ENCODE measurements at regions of chr1 and their contacts with region 1.

Region 1: DNA sequence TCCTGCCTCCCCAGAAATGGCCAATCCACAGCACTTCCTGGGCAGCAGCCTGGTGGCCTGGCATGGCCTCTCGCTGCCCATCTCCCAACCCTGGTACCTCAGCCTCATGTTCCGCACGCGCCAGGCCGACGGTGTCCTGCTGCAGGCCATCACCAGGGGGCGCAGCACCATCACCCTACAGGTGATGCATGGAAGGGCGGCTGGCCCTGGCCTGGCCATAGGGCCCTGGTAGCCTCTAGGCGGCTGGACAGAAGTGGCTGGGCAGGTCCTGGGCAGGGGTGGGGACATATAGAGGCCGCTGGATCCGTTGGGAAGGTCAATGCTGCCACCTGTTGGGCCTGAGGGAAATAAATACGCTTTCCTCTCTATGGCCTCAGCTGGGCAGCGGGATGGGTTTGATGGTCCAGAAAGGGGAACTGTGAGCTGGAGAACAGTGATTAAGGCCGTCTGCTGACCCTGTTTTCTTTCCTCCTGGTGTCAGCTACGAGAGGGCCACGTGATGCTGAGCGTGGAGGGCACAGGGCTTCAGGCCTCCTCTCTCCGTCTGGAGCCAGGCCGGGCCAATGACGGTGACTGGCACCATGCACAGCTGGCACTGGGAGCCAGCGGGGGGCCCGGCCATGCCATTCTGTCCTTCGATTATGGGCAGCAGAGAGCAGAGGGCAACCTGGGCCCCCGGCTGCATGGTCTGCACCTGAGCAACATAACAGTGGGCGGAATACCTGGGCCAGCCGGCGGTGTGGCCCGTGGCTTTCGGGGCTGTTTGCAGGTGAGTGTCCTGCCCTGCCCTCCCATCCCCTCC is 14.5 kb downstream of the CELSR2 start:
- DNase-seq: peak; percentile 90
- H3K4me3 ChIP-seq: no peak overlapping the region
- H3K27ac ChIP-seq: peak overlapping the region; percentile 51 to 54
- H3K4me1 ChIP-seq: no peaks in the 10 kb centered on the region
- H3K27me3 ChIP-seq: no peaks in the 10 kb centered on the region
- CTCF ChIP-seq: peak; percentile 87 to 100 (median 99)
- POLR2A ChIP-seq: no peak

Region 2: DNA sequence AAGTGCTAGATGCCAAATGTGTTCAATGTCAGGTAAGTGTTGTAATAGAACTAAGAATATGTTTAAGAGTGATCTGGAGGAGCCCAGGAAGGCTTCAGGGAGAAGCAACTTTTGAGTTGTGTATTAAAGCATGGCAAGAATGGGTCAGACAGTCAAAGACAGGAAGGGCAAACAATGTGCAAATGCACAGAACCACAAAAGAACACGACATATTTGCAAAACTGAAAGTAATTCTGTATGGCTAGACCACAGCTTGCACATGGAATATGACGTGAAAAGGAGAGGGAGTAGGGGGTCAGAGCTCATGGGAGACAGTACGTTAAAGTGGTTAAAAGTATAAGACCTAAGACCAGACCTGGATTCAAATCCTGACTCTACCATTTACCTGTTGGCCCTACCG is 141.0 kb after region 1 on chr1:
- intact Hi-C with region 1: loop called (anchors 5 kb)
- DNase-seq: no peak
- H3K4me3 ChIP-seq: no peak overlapping the region
- H3K27ac ChIP-seq: no peak overlapping the region
- H3K4me1 ChIP-seq: no peaks in the 10 kb centered on the region
- H3K27me3 ChIP-seq: no peaks in the 10 kb centered on the region
- CTCF ChIP-seq: no peak
- POLR2A ChIP-seq: no peak

Measured in prostate gland (tissue), 2 donors.